Activated CD4-positive, alpha-beta memory T cell treated with anti-CD3 and anti-CD28 coated beads for 36 hours (primary cell): ENCODE measurements at regions of chr10 and their contacts with region 1.

Region 1: DNA sequence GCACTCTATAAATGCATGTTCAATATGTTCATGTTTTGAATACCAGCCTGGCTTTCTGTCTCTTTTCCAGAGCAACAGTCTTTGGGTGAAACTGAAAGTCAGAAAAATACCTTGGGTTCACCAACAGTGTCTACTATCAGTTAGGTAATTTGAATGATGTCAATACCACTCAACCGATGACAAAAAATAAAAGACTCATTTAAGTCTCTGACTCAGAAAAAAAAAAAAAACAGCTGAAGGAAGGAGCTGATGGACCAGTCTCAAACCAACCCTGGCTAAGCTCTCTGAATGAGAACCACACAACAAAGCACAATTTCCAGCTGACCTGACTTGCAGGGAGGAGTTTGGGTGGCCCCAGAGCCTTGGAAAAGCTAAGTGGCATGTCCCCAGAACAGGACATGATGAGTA is 42.5 kb downstream of the ABLIM1 start:
- DNase-seq: peak; percentile 53
- H3K4me3 Mint-ChIP-seq: no peak overlapping the region
- H3K27ac Mint-ChIP-seq: no peak overlapping the region
- H3K4me1 Mint-ChIP-seq: peaks cover 9% of the 10 kb centered on the region
- H3K27me3 Mint-ChIP-seq: peaks cover 2% of the 10 kb centered on the region

Region 2: DNA sequence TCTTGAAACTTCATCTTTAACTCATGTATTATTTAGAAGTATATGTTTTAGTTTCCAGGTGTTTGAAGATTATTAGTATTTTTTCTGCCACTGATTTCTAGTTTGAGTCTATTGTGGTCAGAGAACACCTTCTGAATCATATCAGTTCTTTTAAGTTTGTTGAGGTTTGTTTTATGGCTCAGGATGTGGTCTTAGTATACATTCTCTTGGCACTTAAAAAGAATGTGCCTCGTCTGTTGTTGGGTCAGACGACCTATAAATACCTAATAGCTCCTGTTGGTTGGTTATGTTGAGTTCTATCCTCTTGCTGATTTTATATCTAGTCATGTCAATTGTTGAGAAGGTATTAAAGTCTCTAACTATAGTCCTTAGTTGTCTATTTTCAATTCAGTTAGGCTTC is 420.5 kb before region 1 on chr10:
- CTCF ChIA-PET with region 1: no interaction called
- POLR2A ChIA-PET with region 1: no interaction called
- intact Hi-C with region 1: no loop called
- DNase-seq: no peak
- H3K4me3 Mint-ChIP-seq: no peak overlapping the region
- H3K27ac Mint-ChIP-seq: no peak overlapping the region
- H3K4me1 Mint-ChIP-seq: peaks cover 7% of the 10 kb centered on the region
- H3K27me3 Mint-ChIP-seq: peaks cover 28% of the 10 kb centered on the region

Region 3: DNA sequence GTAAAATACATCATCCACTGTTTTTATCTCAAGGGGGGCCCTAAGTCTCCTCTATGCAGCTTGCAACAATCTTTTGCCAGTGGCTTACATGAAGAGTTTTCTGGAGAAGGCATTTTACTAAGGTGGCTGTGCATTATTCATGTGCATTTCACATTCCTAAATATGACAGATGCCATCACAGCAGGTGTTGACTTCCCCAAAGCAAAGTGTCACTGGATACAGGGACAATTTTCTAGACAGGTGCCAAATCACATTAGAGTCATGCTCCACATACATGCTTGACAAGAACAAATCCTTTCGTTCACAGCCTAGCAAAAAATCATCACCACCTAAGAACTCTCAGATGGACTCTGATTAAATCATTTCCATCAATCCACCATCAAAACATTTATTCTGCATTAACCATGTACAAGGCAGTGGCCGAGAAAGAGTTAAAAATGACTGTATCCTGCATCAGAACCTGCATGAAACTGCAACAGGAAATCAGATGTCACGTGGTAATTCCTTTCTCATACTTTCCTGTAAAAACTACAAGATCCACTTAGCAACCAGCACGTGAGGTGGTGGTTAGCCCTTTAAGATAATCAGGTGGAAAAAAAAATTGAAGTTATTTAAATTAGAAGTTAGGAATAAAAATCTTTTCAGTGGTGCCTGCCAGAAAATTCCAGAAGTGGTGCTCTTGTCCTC is 123.1 kb before region 1 on chr10:
- CTCF ChIA-PET with region 1: no interaction called
- POLR2A ChIA-PET with region 1: no interaction called
- intact Hi-C with region 1: loop called (anchors 2 kb)
- DNase-seq: peak; percentile 55
- H3K4me3 Mint-ChIP-seq: peak overlapping the region; percentile 10
- H3K27ac Mint-ChIP-seq: peak overlapping the region; percentile 84
- H3K4me1 Mint-ChIP-seq: peaks cover 77% of the 10 kb centered on the region
- H3K27me3 Mint-ChIP-seq: no peaks in the 10 kb centered on the region

Region 4: DNA sequence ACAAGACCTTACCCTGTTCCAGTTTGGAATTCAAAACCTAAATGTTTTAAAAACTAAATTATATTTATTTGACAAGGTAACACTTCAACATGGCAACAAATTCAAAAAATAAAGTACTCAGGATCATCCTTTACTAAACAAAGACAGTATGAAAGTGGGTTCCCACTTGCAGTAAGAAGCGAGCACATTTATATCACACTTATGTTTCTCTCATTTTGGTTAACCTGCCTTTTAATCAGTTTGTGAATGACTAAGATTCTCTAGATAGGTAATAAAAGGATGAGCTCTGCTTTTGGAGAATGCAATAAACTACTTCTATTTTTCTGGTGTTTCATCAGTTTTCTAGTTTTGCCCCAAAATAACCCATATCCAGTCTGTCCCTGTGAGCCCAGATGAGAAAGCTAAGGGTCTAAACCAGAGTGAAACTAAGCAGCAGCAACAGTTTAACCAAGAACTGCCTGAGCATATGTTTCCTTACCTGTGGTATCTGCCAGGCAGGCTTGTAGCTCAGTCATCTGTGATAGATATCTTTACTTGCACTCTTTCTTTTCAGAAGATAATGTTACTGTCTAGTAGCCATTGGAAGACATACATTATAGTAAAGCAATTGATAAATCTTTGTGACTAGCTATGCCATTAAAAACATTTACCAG is 21.7 kb before region 1 on chr10:
- CTCF ChIA-PET with region 1: no interaction called
- POLR2A ChIA-PET with region 1: interaction called, 6 read pairs
- intact Hi-C with region 1: loop called (anchors 1 kb)
- DNase-seq: no peak
- H3K4me3 Mint-ChIP-seq: no peak overlapping the region
- H3K27ac Mint-ChIP-seq: no peak overlapping the region
- H3K4me1 Mint-ChIP-seq: peaks cover 3% of the 10 kb centered on the region
- H3K27me3 Mint-ChIP-seq: peaks cover 1% of the 10 kb centered on the region

Region 5: DNA sequence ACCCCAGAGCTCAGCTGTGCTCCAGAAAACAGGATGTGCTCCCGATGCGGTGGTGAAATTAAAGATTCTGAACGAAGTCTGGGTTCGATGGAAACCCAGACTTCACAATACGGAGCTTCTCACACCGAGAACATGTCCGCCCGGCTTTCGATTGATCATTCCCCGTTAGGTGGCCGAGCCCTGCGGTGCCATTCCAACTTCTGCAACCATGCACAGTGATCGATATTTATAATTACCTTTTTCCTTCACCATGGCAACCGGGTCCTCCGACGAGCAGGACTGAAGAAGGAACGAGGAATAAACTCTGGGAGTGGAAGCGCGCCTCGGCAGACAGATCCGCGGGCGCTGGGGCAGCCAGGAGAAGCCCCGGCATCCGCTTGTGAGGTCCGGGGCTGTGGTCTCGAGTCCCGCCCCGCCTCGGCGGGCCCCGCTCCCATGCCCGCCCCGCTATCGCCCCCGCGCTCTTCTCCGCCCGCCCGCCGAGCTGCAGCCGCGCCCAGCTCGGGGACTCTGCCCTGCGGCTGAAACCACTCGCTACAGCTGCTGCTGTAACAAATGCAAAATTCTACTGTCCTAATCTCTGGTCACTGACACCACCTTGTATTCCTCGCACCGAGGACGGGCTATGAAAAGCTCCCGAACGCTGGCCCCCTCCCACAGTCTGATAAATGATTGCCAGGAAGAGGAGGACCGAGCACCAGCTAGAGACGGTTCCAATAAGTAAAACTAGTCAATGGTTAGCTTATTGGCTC is 16.2 kb after region 1 on chr10:
- CTCF ChIA-PET with region 1: no interaction called
- POLR2A ChIA-PET with region 1: interaction called, 3 read pairs
- intact Hi-C with region 1: loop called (anchors 2 kb)
- DNase-seq: peak; percentile 43
- H3K4me3 Mint-ChIP-seq: peak overlapping the region; percentile 78
- H3K27ac Mint-ChIP-seq: no peak overlapping the region
- H3K4me1 Mint-ChIP-seq: peaks cover 21% of the 10 kb centered on the region
- H3K27me3 Mint-ChIP-seq: peaks cover 45% of the 10 kb centered on the region

Region 6: GRCh38 chr10:114856544-114857282 is 241.1 kb after region 1 on chr10:
- CTCF ChIA-PET with region 1: no interaction called
- POLR2A ChIA-PET with region 1: no interaction called
- intact Hi-C with region 1: loop called (anchors 1 kb)
- DNase-seq: no peak
- H3K4me3 Mint-ChIP-seq: peak overlapping the region; percentile 23
- H3K27ac Mint-ChIP-seq: peak overlapping the region; percentile 44
- H3K4me1 Mint-ChIP-seq: peaks cover 25% of the 10 kb centered on the region
- H3K27me3 Mint-ChIP-seq: no peaks in the 10 kb centered on the region